AG04449 (cell line): ENCODE measurements at regions of chr19 and their contacts with region 1.

Region 1: GRCh38 chr19:40576585-40577451 is at the start of gene SHKBP1:
- DNase-seq: peak; percentile 56
- H3K4me3 ChIP-seq: peak within 1 kb of the TSS; percentile 94
- CTCF ChIP-seq: no peak

Region 2: DNA sequence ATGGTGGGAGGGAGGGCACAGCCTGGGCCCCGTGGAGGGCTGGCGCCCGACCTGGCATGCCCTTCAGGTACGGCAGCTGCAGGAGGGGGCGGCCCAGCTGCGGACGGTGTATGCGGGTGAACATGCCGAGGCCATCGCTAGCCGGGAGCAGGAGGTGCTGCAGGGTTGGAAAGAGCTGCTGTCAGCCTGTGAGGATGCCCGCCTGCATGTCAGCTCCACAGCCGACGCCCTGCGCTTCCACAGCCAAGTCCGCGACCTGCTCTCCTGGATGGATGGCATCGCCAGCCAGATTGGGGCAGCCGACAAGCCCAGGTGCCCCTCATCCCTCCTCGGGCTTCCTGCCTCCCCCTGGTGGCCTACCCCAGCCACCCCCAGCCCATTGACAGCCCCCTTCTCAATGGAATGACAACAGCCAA is 16.7 kb before region 1 on chr19:
- CTCF ChIA-PET with region 1: no interaction called
- POLR2A ChIA-PET with region 1: no interaction called
- DNase-seq: no peak
- H3K4me3 ChIP-seq: no peak overlapping the region
- CTCF ChIP-seq: no peak

Region 3: GRCh38 chr19:40603389-40604135 is 26.7 kb after region 1 on chr19:
- CTCF ChIA-PET with region 1: interaction called, 15 read pairs
- POLR2A ChIA-PET with region 1: interaction called, 3 read pairs
- DNase-seq: no peak
- H3K4me3 ChIP-seq: peak overlapping the region; percentile 53
- CTCF ChIP-seq: no peak